ENCODE measurements at regions of chr9 and their contacts with region 1.

Region 1: DNA sequence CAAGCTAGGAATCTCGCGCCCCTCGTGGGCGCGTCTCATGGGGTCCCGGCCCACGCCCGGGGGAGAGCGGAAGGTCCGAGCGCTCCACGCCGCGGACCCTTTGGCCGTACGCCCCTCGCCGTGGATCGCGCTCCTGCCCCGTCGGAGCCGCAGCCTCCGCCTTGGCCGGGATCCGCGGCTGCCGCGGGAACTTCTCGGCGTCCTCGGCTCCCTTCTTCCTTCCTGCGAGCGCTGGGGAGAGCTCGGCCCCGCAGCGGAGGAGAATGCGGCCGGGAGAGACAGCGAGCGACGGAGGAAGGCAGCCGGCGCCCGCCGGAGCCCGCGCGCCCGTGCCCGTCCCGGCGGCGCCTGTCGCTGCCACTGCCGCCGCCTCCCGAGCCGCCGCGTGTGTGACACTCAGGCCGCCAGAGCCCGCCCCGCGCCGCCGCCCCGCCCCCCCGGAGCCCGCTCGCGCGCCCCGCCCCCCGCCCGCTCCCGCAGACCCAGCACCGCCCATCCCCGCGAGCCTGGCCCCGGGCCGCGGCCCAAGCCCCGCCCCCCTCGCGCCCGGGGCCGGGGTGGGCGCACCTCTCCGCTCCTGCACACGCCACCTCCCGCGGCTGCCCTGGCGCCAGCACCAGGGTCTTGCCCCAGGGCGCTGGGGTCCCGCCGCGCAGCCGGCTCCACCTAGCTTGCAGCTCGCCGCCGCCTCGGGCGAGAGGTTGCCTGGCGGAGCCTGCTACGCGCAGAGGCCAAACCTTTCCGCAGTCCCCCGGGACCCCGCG is at the start of gene SHB:
- DNase-seq: peak; percentile 62 to 76
- H3K4me3 ChIP-seq: peak within 1 kb of the TSS; percentile 79 to 85 (median 84)
- H3K27ac ChIP-seq: peak within 1 kb of the TSS; percentile 85 to 87
- H3K4me1 ChIP-seq: no peaks in the 10 kb centered on the region
- H3K27me3 ChIP-seq: no peaks in the 10 kb centered on the region
- CTCF ChIP-seq: peak; percentile 12 to 45 (median 34)
- POLR2A ChIP-seq: peak; percentile 15
- total RNA-seq, gene SHB: 3.8 to 18.7 (median 17.9) TPM

Region 2: DNA sequence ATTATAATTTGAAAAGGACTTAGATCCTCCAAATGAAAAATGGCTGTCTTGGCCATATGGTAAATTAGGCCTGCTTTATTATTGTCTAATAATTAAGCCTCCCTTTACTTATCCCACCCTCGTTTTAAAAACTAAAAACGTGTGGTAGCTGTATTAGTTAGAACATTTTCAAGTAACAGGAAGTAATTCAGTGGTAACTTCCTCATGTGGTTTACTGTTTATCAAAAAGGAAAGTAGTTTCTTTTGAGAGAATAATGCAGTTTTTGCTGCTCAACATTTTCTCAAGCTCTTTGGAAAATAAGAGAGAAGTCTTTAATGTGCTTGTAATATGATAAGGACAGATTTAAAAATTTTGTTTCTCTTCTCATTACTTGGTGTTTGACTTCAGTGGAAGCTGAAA is 922.6 kb before region 1 on chr9:
- intact Hi-C with region 1: no loop called
- DNase-seq: no peak
- H3K4me3 ChIP-seq: no peak overlapping the region
- H3K27ac ChIP-seq: peak overlapping the region in 1 of 2 donors; percentile 19
- H3K4me1 ChIP-seq: no peaks in the 10 kb centered on the region
- H3K27me3 ChIP-seq: no peaks in the 10 kb centered on the region
- CTCF ChIP-seq: no peak
- POLR2A ChIP-seq: no peak

Region 3: GRCh38 chr9:38017149-38017884 is 51.7 kb before region 1 on chr9:
- intact Hi-C with region 1: loop called (anchors 10 kb)
- DNase-seq: peak; percentile 83 to 84
- H3K4me3 ChIP-seq: no peak overlapping the region
- H3K27ac ChIP-seq: peak overlapping the region; percentile 59 to 73
- H3K4me1 ChIP-seq: peaks cover 18 to 21% of the 10 kb centered on the region in 2 donors
- H3K27me3 ChIP-seq: no peaks in the 10 kb centered on the region
- CTCF ChIP-seq: peak; percentile 11 to 77 (median 60)
- POLR2A ChIP-seq: no peak

Region 4: GRCh38 chr9:38127271-38127882 is 58.3 kb after region 1 on chr9:
- intact Hi-C with region 1: no loop called
- DNase-seq: no peak
- H3K4me3 ChIP-seq: no peak overlapping the region
- H3K27ac ChIP-seq: no peak overlapping the region
- H3K4me1 ChIP-seq: no peaks in the 10 kb centered on the region
- H3K27me3 ChIP-seq: no peaks in the 10 kb centered on the region
- CTCF ChIP-seq: no peak
- POLR2A ChIP-seq: no peak

Region 5: DNA sequence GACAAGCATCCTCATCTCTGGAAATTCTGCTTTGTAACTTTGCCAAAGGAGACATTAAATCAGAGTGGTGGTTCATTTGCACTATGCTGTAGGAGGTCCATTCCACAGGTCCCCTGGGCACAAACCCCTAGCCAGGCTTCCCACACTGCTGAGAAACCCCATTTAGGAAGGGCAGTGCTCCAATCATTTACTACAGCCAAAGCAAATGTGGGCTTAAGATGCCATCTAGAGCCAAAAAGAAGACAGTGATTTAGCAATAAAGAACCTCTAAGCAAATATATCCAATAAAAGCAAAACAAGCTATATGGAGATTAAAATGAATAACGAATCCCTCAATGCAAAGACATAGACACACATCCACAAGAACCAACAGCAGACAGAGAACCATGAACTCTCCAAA is 194.5 kb after region 1 on chr9:
- intact Hi-C with region 1: no loop called
- DNase-seq: no peak
- H3K4me3 ChIP-seq: no peak overlapping the region
- H3K27ac ChIP-seq: no peak overlapping the region
- H3K4me1 ChIP-seq: no peaks in the 10 kb centered on the region
- H3K27me3 ChIP-seq: no peaks in the 10 kb centered on the region
- CTCF ChIP-seq: peak in 2 of 3 donors; percentile 28 to 33
- POLR2A ChIP-seq: no peak